HCT116 (cell line): ENCODE measurements at regions of chr5 and their contacts with region 1.

Region 1: GRCh38 chr5:115349020-115349817 is 52.8 kb upstream of the CCDC112 start:
- DNase-seq: peak; percentile 36
- ATAC-seq: peak; percentile 82
- H3K4me3 ChIP-seq: no peak overlapping the region
- H3K27ac ChIP-seq: no peak overlapping the region
- H3K4me1 ChIP-seq: peaks cover 8 to 26% of the 10 kb centered on the region in 2 experiments
- H3K27me3 ChIP-seq: no peaks in the 10 kb centered on the region
- CTCF ChIP-seq: peak in 1 of 3 experiments; percentile 22; a peak in 1 of 6 replicates
- POLR2A ChIP-seq: no peak
- RAD21 ChIP-seq: no peak

Region 2: DNA sequence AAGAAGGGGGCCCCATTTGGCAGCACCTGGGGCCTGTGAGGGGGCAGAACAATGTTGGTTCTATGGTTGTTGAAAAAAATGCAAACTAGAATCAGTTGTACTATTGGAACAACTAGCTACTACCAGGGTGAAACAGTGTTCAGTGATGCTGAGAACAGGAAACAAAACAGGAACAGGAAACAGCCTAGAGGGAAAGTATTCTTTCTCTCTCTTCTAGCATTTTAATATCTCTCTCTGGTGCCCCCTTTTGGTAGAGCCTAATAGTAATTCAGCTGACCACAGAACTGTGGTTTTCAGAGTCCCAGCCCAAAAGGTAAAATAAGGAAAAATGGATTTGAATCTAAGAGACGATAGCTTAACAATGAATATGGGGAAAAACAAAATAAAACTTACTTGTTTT is 1125.4 kb before region 1 on chr5:
- CTCF ChIA-PET with region 1: no interaction called
- POLR2A ChIA-PET with region 1: no interaction called
- RAD21 ChIA-PET with region 1: no interaction called
- intact Hi-C with region 1: loop called (anchors 10 kb)
- DNase-seq: peak; percentile 22
- ATAC-seq: peak; percentile 69
- H3K4me3 ChIP-seq: no peak overlapping the region
- H3K27ac ChIP-seq: no peak overlapping the region
- H3K4me1 ChIP-seq: no peaks in the 10 kb centered on the region
- H3K27me3 ChIP-seq: no peaks in the 10 kb centered on the region
- CTCF ChIP-seq: peak in 2 of 3 experiments; percentile 48 to 69; a peak in 4 of 6 replicates
- POLR2A ChIP-seq: no peak
- RAD21 ChIP-seq: peak; percentile 27; the same call in 1 of the 2 replicates

Region 3: GRCh38 chr5:115262321-115263077 is 86.7 kb before region 1 on chr5 and contains the start of gene PGGT1B:
- CTCF ChIA-PET with region 1: no interaction called
- POLR2A ChIA-PET with region 1: no interaction called
- RAD21 ChIA-PET with region 1: no interaction called
- intact Hi-C with region 1: no loop called
- DNase-seq: peak; percentile 32
- ATAC-seq: peak; percentile 94
- H3K4me3 ChIP-seq: peak within 1 kb of the TSS; percentile 84 to 96
- H3K27ac ChIP-seq: peak within 1 kb of the TSS; percentile 80
- H3K4me1 ChIP-seq: peaks cover 7 to 17% of the 10 kb centered on the region in 2 experiments; a peak in 2 of 4 replicates
- H3K27me3 ChIP-seq: no peaks in the 10 kb centered on the region
- CTCF ChIP-seq: no peak
- POLR2A ChIP-seq: peak; percentile 59
- RAD21 ChIP-seq: peak; percentile 10; the same call in 1 of the 2 replicates
- total RNA-seq, gene PGGT1B: 45.8 TPM